ENCODE measurements at regions of chr9 and their contacts with region 1.

Region 1: DNA sequence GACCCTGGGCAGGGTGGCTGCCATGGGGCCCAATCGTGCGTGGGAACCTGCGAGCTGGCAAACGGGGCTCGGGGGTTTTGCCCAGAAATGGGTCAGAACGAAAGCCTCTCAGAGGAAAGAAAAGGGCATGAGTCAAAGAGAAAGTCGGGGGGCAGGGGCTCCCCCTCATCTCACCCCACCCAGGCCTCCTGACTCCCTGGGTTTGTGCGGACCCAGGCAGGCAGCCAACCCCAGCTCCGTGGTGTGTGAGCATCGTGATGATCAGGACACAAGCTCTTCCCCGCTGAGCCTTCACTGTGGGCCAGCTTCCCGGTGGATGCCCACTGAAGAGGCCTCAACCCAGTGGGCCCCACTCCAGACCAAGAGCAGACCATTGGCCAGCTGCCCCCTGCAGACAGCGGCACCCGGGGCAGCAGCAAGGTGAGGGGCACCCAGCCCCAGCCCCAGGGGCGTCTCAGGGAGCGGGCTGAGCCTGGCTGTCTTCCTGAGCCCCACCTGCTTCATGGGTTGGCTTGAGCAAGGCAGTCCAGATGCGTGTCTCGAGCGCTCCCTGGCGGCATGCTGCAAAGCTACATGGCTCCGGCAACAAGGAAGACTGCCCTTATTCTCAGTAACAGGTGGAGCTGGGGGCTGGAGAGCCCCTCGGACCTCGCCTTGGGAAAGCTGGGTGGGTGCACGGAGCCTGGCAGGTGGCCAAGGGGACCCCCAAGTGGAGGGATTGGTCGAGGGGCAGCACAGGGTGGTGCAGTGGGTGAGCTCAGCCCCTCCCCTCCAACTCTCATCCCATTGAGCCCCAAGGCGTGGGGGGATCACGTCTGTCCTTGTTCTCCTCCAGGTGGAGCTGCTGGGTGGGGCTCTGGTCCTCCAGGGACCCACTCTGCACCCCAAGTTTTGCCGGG is 3.2 kb upstream of the FUT7 start:
- DNase-seq: peak; percentile 55
- ATAC-seq: peak; percentile 89
- H3K4me3 ChIP-seq: peak overlapping the region; percentile 36; the same call in 1 of the 2 replicates
- H3K27ac ChIP-seq: no peak overlapping the region; the same call in 1 of the 2 replicates
- H3K4me1 ChIP-seq: peaks cover 34% of the 10 kb centered on the region
- H3K27me3 ChIP-seq: no peaks in the 10 kb centered on the region
- CTCF ChIP-seq: peak; percentile 90 to 97 (median 97)
- EP300 ChIP-seq: no peak; a peak in 1 of 4 replicates
- POLR2A ChIP-seq: no peak
- RAD21 ChIP-seq: peak; percentile 95

Region 2: GRCh38 chr9:136429683-136430590 is 605.2 kb before region 1 on chr9:
- CTCF ChIA-PET with region 1: no interaction called
- POLR2A ChIA-PET with region 1: no interaction called
- RAD21 ChIA-PET with region 1: no interaction called
- SMC1A ChIA-PET with region 1: no interaction called
- in situ Hi-C with region 1: no loop called
- intact Hi-C with region 1: no loop called
- DNase-seq: no peak
- ATAC-seq: no peak
- H3K4me3 ChIP-seq: no peak overlapping the region
- H3K27ac ChIP-seq: no peak overlapping the region
- H3K4me1 ChIP-seq: no peaks in the 10 kb centered on the region
- H3K27me3 ChIP-seq: no peaks in the 10 kb centered on the region
- CTCF ChIP-seq: no peak
- EP300 ChIP-seq: no peak
- POLR2A ChIP-seq: no peak
- RAD21 ChIP-seq: no peak

Region 3: GRCh38 chr9:136777359-136777758 is 257.8 kb before region 1 on chr9:
- CTCF ChIA-PET with region 1: interaction called, 12 read pairs
- POLR2A ChIA-PET with region 1: no interaction called
- RAD21 ChIA-PET with region 1: interaction called, 4 read pairs
- SMC1A ChIA-PET with region 1: interaction called, 3 read pairs
- in situ Hi-C with region 1: no loop called
- intact Hi-C with region 1: no loop called
- DNase-seq: no peak
- ATAC-seq: no peak
- H3K4me3 ChIP-seq: no peak overlapping the region
- H3K27ac ChIP-seq: no peak overlapping the region
- H3K4me1 ChIP-seq: no peaks in the 10 kb centered on the region
- H3K27me3 ChIP-seq: peaks cover 0 to 1% of the 10 kb centered on the region in 2 experiments; a peak in 1 of 4 replicates
- CTCF ChIP-seq: no peak
- EP300 ChIP-seq: no peak
- POLR2A ChIP-seq: no peak
- RAD21 ChIP-seq: no peak

Region 4: DNA sequence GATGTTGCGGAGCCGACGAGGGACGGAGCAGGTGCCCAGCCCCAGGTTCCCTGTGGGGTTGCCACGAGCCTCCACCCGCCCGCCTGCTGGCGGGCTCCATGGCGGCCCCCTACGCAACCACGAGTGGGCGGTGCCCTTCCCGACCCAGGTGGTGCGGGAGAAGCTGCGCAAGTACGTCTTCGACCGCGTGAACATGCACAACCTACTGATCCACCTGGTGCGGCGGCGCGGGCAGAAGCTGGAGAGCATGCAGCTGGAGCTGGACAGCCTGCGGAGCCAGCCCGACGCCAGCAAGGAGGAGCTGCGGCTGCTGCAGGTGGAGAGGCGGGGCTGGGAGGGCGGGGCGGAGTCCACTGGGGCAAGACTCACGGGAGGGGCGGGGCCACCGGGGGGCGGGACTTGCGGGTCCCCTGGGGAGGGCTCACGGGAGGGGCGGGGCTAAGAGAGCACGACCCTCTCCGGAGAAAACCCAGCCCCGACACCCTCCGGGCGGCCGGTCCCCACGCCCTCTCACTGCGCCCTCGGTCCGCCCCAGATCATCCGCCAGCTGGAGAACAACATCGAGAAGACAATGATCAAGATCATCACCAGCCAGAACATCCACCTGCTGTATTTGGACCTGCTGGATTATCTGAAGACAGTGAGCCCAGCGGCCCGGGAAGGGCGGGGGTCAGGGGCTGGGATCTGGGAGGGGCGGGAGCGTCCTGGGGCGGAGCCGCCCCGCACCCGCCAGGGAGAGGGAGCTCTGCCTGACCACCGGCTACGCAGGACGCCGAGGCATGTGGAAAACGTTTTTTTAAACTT is 235.1 kb before region 1 on chr9:
- CTCF ChIA-PET with region 1: interaction called, 15 read pairs
- POLR2A ChIA-PET with region 1: no interaction called
- RAD21 ChIA-PET with region 1: interaction called, 4 read pairs
- SMC1A ChIA-PET with region 1: no interaction called
- in situ Hi-C with region 1: loop called (anchors 5 kb)
- intact Hi-C with region 1: no loop called
- DNase-seq: no peak
- ATAC-seq: peak; percentile 81
- H3K4me3 ChIP-seq: peak overlapping the region; percentile 67; the same call in 1 of the 2 replicates
- H3K27ac ChIP-seq: no peak overlapping the region
- H3K4me1 ChIP-seq: peaks cover 12% of the 10 kb centered on the region; the same call in 1 of the 2 replicates
- H3K27me3 ChIP-seq: no peaks in the 10 kb centered on the region
- CTCF ChIP-seq: no peak
- EP300 ChIP-seq: no peak
- POLR2A ChIP-seq: peak; percentile 68
- RAD21 ChIP-seq: no peak

Region 5: GRCh38 chr9:136849038-136849959 is 185.8 kb before region 1 on chr9 and contains the start of gene PHPT1:
- CTCF ChIA-PET with region 1: interaction called, 35 read pairs
- POLR2A ChIA-PET with region 1: no interaction called
- RAD21 ChIA-PET with region 1: interaction called, 14 read pairs
- SMC1A ChIA-PET with region 1: no interaction called
- in situ Hi-C with region 1: no loop called
- intact Hi-C with region 1: loop called (anchors 5 kb)
- DNase-seq: peak; percentile 92
- ATAC-seq: peak; percentile 91
- H3K4me3 ChIP-seq: peak within 1 kb of the TSS; percentile 80
- H3K27ac ChIP-seq: peak within 1 kb of the TSS; percentile 81
- H3K4me1 ChIP-seq: peaks cover 7% of the 10 kb centered on the region
- H3K27me3 ChIP-seq: no peaks in the 10 kb centered on the region; a peak in 1 of 4 replicates
- CTCF ChIP-seq: no peak
- EP300 ChIP-seq: no peak
- POLR2A ChIP-seq: peak; percentile 92
- RAD21 ChIP-seq: no peak
- polyA plus RNA-seq, gene PHPT1: 169 to 200 TPM

Region 6: GRCh38 chr9:136949817-136950655 is 85.1 kb before region 1 on chr9:
- CTCF ChIA-PET with region 1: interaction called, 163 read pairs
- POLR2A ChIA-PET with region 1: interaction called, 19 read pairs
- RAD21 ChIA-PET with region 1: interaction called, 109 read pairs
- SMC1A ChIA-PET with region 1: interaction called, 77 read pairs
- in situ Hi-C with region 1: loop called (anchors 5 kb)
- intact Hi-C with region 1: loop called (anchors 1 kb)
- DNase-seq: peak; percentile 73
- ATAC-seq: peak; percentile 98
- H3K4me3 ChIP-seq: peak overlapping the region; percentile 77
- H3K27ac ChIP-seq: peak overlapping the region; percentile 53
- H3K4me1 ChIP-seq: peaks cover 7% of the 10 kb centered on the region
- H3K27me3 ChIP-seq: no peaks in the 10 kb centered on the region
- CTCF ChIP-seq: peak in 2 of 3 experiments; percentile 22 to 37; a peak in 2 of 6 replicates
- EP300 ChIP-seq: no peak
- POLR2A ChIP-seq: no peak
- RAD21 ChIP-seq: no peak

Region 7: DNA sequence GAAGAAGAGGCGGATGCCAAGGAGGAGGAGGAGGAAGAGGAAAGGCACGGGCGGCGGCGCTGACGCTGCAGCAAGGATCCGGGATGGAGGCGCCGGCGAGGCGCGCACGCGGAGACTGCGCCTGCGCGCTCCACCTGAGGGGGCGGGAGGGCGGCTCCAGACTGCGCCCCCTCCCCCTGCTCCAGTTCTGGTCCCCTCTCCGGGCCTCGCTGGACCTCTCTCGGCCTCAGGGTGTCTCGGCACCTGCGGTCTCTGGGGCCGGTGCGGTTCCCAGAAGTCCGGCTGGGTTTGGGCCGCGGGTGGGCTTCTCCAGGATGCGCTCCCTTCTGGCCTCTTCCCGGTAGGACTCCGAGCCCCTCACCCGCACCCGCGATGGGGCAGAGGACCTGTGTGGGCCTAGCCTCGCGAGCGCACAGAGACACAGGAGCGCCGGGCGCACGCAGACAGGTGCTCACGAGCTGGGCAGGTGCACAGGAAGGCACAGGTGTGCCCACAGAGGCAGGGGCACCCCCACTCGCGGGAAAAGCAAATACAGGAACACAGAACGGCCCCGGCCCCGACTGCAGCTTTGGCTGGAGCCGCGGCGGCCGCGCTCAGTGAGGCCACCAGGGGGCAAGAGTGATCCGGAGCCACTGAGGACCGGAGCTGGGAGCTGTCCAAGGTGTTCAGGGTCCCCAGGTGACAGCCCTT is 11.1 kb after region 1 on chr9 and contains the start of gene NPDC1:
- CTCF ChIA-PET with region 1: interaction called, 31 read pairs
- POLR2A ChIA-PET with region 1: no interaction called
- RAD21 ChIA-PET with region 1: interaction called, 3 read pairs
- SMC1A ChIA-PET with region 1: interaction called, 6 read pairs
- in situ Hi-C with region 1: no loop called
- intact Hi-C with region 1: no loop called
- DNase-seq: no peak
- ATAC-seq: peak; percentile 90
- H3K4me3 ChIP-seq: no peak within 1 kb of the TSS
- H3K27ac ChIP-seq: no peak within 1 kb of the TSS
- H3K4me1 ChIP-seq: no peaks in the 10 kb centered on the region
- H3K27me3 ChIP-seq: peaks cover 12 to 18% of the 10 kb centered on the region in 2 experiments; a peak in 3 of 4 replicates
- CTCF ChIP-seq: peak; percentile 82 to 95 (median 93)
- EP300 ChIP-seq: no peak
- POLR2A ChIP-seq: no peak
- RAD21 ChIP-seq: peak; percentile 63
- polyA plus RNA-seq, gene NPDC1: not detected

Region 8: DNA sequence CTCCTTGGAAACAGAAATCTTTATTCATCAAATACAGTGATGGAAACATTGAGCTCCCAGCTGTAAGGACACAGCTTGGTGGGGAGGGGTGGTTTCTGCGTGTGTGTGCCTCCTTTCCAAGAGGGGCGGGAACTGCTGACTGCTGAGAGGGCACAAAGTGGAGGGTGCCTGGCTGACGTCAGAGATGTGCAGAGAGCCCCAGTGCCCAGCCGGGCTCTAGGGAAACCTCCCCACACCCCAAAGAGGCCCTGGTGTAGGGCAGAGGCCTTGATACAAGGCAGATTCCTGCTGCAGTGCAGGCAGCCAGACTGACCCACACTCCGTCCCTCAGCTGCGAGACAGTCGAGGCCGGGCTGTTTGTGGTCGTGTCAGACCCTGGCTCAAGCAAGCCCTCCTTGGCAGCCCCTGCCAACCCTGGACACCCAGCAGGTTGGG is 1033.5 kb after region 1 on chr9:
- CTCF ChIA-PET with region 1: no interaction called
- POLR2A ChIA-PET with region 1: no interaction called
- RAD21 ChIA-PET with region 1: no interaction called
- SMC1A ChIA-PET with region 1: no interaction called
- in situ Hi-C with region 1: no loop called
- intact Hi-C with region 1: no loop called
- DNase-seq: no peak
- ATAC-seq: no peak
- H3K4me3 ChIP-seq: no peak overlapping the region
- H3K27ac ChIP-seq: no peak overlapping the region
- H3K4me1 ChIP-seq: no peaks in the 10 kb centered on the region
- H3K27me3 ChIP-seq: peaks cover 0 to 1% of the 10 kb centered on the region in 2 experiments; a peak in 2 of 4 replicates
- CTCF ChIP-seq: no peak
- EP300 ChIP-seq: no peak
- POLR2A ChIP-seq: no peak
- RAD21 ChIP-seq: no peak

Measured in GM12878 (cell line).